Mammary epithelial cell (primary cell): ENCODE measurements at regions of chr21 and their contacts with region 1.

Region 1: GRCh38 chr21:29164325-29164942 is 34.0 kb downstream of the MAP3K7CL start:
- DNase-seq: peak; percentile 68
- H3K4me3 ChIP-seq: no peak overlapping the region
- H3K27ac ChIP-seq: peak overlapping the region; percentile 19
- H3K4me1 ChIP-seq: peaks cover 23% of the 10 kb centered on the region
- H3K27me3 ChIP-seq: no peaks in the 10 kb centered on the region
- CTCF ChIP-seq: peak; percentile 63 to 78

Region 2: DNA sequence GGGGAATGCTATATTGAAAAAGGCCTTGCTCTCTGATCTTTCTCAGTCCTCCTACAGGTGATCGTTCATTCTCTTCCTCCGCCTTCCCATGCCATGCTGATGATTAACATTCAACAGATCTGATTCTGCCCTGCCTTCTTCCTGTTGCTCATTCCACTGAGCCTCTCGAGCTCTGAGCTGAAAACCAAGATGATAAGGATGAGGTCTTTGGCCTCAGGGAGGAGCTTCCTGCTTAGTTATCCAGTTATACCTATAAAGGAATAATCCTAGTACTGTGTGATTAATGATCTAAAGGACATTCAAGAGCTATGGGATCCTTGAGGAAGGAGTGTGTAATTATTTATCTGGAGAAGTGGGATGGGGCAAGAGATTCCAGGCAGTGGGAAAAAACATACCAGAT is 59.2 kb before region 1 on chr21:
- CTCF ChIA-PET with region 1: interaction called, 8 read pairs
- dilution Hi-C with region 1: no loop called
- in situ Hi-C with region 1: no loop called
- intact Hi-C with region 1: loop called (anchors 5 kb)
- DNase-seq: peak; percentile 80
- H3K4me3 ChIP-seq: no peak overlapping the region
- H3K27ac ChIP-seq: no peak overlapping the region
- H3K4me1 ChIP-seq: peaks cover 15% of the 10 kb centered on the region
- H3K27me3 ChIP-seq: no peaks in the 10 kb centered on the region
- CTCF ChIP-seq: peak in 1 of 2 donors; percentile 9

Region 3: DNA sequence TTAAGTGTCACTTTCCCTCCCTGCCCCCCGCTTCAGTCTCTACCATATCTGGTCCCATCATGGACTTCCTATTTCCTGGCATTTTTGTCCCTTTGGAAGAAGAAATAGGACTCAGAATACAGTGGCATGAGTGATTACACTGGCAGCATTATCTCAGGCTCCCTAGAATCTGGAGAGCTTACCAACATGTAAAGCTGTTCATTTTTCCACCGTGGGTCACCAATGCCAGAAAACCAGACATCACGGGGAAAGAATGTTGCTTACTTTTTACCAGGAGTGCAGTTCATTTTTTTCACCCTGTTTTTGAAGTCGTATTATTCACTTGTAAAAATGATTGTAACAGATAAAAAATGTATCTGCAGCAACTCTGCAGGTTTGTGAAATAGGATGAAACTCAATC is 179.1 kb after region 1 on chr21:
- CTCF ChIA-PET with region 1: no interaction called
- dilution Hi-C with region 1: no loop called
- in situ Hi-C with region 1: no loop called
- intact Hi-C with region 1: loop called (anchors 1 kb)
- DNase-seq: no peak
- H3K4me3 ChIP-seq: no peak overlapping the region
- H3K27ac ChIP-seq: no peak overlapping the region
- H3K4me1 ChIP-seq: peaks cover 45% of the 10 kb centered on the region
- H3K27me3 ChIP-seq: no peaks in the 10 kb centered on the region
- CTCF ChIP-seq: no peak

Region 4: DNA sequence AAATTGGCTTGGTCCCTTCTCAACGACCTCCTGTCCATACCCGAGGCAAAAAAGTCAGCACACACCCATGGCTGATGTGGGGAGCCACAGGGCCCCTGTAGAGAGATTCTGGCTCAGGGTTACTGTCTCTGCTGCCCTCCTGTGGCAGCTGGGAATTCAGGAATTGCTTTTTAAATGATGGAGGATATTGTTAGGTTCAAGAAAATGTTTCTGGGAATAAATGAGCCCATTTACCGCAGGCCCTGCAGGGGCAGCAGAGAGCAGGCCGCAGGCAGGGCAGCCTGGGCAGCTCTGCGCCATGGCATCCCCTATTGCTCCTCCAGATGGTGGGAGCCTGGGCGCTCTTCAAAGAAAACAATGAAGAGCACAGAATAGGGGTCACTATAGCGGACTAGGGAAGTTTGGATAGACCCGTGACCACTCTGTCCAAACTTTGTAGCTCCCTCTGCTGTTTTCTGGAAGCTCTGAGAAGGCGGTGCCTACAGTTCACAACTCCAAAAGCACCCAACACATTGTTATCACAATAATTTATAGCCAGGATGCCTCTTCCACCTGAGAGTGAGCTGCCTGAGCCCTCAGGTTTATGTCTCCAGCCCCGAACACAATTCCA is 335.4 kb after region 1 on chr21:
- CTCF ChIA-PET with region 1: no interaction called
- dilution Hi-C with region 1: no loop called
- in situ Hi-C with region 1: no loop called
- intact Hi-C with region 1: loop called (anchors 1 kb)
- DNase-seq: peak; percentile 51
- H3K4me3 ChIP-seq: no peak overlapping the region
- H3K27ac ChIP-seq: no peak overlapping the region
- H3K4me1 ChIP-seq: no peaks in the 10 kb centered on the region
- H3K27me3 ChIP-seq: no peaks in the 10 kb centered on the region
- CTCF ChIP-seq: peak; percentile 67 to 78